K562 (cell line): ENCODE measurements at regions of chr2 and their contacts with region 1.

Region 1: GRCh38 chr2:180077295-180077906 is 70.3 kb upstream of the CWC22 start:
- DNase-seq: peak in 3 of 4 experiments; percentile 13 to 15 (median 14)
- ATAC-seq: peak; percentile 77
- H3K4me3 ChIP-seq: no peak overlapping the region
- H3K27ac ChIP-seq: no peak overlapping the region
- H3K4me1 ChIP-seq: no peaks in the 10 kb centered on the region
- H3K27me3 ChIP-seq: no peaks in the 10 kb centered on the region
- CTCF ChIP-seq: peak in 2 of 3 experiments; percentile 41 to 74; a peak in 5 of 6 replicates
- EP300 ChIP-seq: no peak
- POLR2A ChIP-seq: no peak
- RAD21 ChIP-seq: peak; percentile 86 to 92

Region 2: DNA sequence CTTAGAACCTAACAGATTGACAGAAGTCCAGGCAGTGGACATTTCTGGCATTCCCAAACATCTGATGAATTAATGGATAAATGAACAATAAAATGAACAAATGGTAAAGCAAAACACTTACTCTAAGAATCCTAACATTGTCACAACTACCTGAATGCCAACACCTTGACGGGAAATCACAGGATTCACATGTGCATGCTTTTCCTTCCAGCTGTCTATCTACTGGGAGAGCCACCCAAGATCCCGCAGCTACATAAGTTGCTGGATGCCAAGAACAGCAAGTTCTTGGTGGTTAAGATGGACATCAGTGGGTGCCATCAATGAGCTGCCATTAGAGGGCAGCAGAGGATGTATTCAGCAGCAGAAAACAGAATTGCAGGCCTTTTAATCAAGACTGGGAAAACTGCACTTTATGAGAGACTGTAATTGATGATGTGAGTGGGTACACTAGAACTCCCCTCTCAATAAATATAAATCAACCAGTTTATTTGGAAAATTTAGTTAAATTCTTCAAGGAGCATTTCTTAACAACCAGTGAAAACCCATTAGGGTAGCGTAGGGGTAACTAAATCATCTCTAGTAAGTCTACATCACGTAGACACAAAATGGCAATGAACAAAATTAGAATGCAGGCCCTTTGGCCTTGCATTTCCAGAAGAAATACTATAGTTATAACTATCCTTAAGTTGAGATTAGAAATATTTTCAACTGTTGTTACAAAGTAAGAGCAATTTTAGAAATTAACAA is 858.4 kb before region 1 on chr2:
- CTCF ChIA-PET with region 1: no interaction called
- POLR2A ChIA-PET with region 1: no interaction called
- in situ Hi-C with region 1: no loop called
- intact Hi-C with region 1: loop called (anchors 10 kb)
- DNase-seq: peak; percentile 30 to 73 (median 39)
- ATAC-seq: peak; percentile 85
- H3K4me3 ChIP-seq: no peak overlapping the region
- H3K27ac ChIP-seq: no peak overlapping the region
- H3K4me1 ChIP-seq: no peaks in the 10 kb centered on the region
- H3K27me3 ChIP-seq: no peaks in the 10 kb centered on the region
- CTCF ChIP-seq: peak; percentile 70 to 78 (median 73)
- EP300 ChIP-seq: no peak
- POLR2A ChIP-seq: no peak
- RAD21 ChIP-seq: peak; percentile 64 to 74

Region 3: DNA sequence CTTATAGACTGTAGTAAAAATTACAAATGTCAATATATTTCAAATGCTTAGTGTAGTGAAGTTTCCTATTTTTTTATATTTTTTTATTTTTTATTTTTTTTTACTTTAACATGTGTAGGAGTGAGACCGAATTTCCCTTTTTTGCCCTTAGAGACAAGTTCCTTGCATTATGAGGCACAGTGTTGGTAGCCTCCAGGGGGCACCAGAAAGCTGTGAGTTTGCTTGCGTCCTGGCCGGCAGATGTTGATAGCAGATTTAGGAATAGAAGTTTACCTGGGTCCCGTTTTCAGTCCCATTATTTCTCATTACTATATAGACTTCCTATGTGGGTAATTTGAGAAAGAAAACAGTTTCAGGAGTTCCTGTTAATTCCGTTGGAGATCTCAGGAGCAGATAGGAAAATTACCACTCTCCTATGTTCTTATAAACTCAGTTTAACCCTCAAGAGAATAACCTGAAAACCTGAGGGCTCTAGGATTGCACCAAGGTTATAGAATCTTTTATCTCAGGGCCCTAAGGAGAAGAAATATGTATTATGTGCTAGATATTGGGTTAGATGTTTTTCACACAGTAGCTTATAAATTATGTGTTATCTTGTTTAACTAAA is 655.3 kb before region 1 on chr2:
- CTCF ChIA-PET with region 1: no interaction called
- POLR2A ChIA-PET with region 1: no interaction called
- in situ Hi-C with region 1: no loop called
- intact Hi-C with region 1: loop called (anchors 5 kb)
- DNase-seq: peak in 3 of 4 experiments; percentile 15 to 63 (median 20)
- ATAC-seq: peak; percentile 85
- H3K4me3 ChIP-seq: no peak overlapping the region
- H3K27ac ChIP-seq: no peak overlapping the region
- H3K4me1 ChIP-seq: no peaks in the 10 kb centered on the region
- H3K27me3 ChIP-seq: no peaks in the 10 kb centered on the region
- CTCF ChIP-seq: peak; percentile 58 to 60 (median 59)
- EP300 ChIP-seq: no peak
- POLR2A ChIP-seq: no peak
- RAD21 ChIP-seq: peak; percentile 32 to 40

Region 4: GRCh38 chr2:179842498-179843153 is 234.8 kb before region 1 on chr2:
- CTCF ChIA-PET with region 1: interaction called, 12 read pairs
- POLR2A ChIA-PET with region 1: no interaction called
- in situ Hi-C with region 1: no loop called
- intact Hi-C with region 1: loop called (anchors 1 kb)
- DNase-seq: peak; percentile 43 to 59 (median 54)
- ATAC-seq: peak; percentile 94
- H3K4me3 ChIP-seq: no peak overlapping the region
- H3K27ac ChIP-seq: no peak overlapping the region
- H3K4me1 ChIP-seq: no peaks in the 10 kb centered on the region
- H3K27me3 ChIP-seq: no peaks in the 10 kb centered on the region
- CTCF ChIP-seq: peak; percentile 67 to 68 (median 67)
- EP300 ChIP-seq: no peak
- POLR2A ChIP-seq: no peak
- RAD21 ChIP-seq: peak; percentile 53 to 75

Region 5: GRCh38 chr2:179936654-179937053 is 140.7 kb before region 1 on chr2:
- CTCF ChIA-PET with region 1: no interaction called
- POLR2A ChIA-PET with region 1: no interaction called
- in situ Hi-C with region 1: no loop called
- intact Hi-C with region 1: loop called (anchors 5 kb)
- DNase-seq: peak; percentile 22 to 73 (median 54)
- ATAC-seq: peak; percentile 89
- H3K4me3 ChIP-seq: no peak overlapping the region
- H3K27ac ChIP-seq: no peak overlapping the region
- H3K4me1 ChIP-seq: no peaks in the 10 kb centered on the region
- H3K27me3 ChIP-seq: no peaks in the 10 kb centered on the region
- CTCF ChIP-seq: peak; percentile 61 to 67 (median 65)
- EP300 ChIP-seq: no peak
- POLR2A ChIP-seq: no peak
- RAD21 ChIP-seq: peak in 1 of 2 experiments; percentile 56; a peak in 2 of 4 replicates

Region 6: DNA sequence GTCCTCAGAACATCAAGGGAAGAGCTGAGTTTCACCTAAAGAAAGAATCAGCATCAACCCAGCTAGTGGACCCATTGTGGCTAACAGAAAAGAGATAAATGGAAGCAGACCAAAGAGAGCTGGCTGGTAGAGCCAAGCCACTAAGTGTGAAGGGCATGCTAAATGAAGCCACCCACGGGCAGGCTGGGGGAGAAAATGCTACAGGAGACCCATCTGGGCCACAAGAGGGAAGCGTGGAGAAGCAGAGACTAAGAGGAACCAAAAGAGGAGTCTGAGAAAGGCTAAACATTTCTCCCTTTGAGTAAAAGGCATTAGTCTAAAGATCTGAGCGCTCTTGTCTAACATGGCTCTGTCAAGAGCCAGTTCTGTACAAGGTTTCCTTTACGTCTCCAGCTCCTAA is 86.1 kb before region 1 on chr2:
- CTCF ChIA-PET with region 1: interaction called, 8 read pairs
- POLR2A ChIA-PET with region 1: no interaction called
- in situ Hi-C with region 1: no loop called
- intact Hi-C with region 1: loop called (anchors 5 kb)
- DNase-seq: peak in 2 of 4 experiments; percentile 25 to 38
- ATAC-seq: peak; percentile 84
- H3K4me3 ChIP-seq: no peak overlapping the region
- H3K27ac ChIP-seq: no peak overlapping the region
- H3K4me1 ChIP-seq: no peaks in the 10 kb centered on the region; a peak in 2 of 5 replicates
- H3K27me3 ChIP-seq: no peaks in the 10 kb centered on the region
- CTCF ChIP-seq: peak; percentile 39 to 44 (median 41); a peak in 4 of 6 replicates
- EP300 ChIP-seq: no peak
- POLR2A ChIP-seq: no peak
- RAD21 ChIP-seq: peak in 1 of 2 experiments; percentile 49; a peak in 3 of 4 replicates